ENCODE measurements at regions of chr5 and their contacts with region 1.

Region 1: DNA sequence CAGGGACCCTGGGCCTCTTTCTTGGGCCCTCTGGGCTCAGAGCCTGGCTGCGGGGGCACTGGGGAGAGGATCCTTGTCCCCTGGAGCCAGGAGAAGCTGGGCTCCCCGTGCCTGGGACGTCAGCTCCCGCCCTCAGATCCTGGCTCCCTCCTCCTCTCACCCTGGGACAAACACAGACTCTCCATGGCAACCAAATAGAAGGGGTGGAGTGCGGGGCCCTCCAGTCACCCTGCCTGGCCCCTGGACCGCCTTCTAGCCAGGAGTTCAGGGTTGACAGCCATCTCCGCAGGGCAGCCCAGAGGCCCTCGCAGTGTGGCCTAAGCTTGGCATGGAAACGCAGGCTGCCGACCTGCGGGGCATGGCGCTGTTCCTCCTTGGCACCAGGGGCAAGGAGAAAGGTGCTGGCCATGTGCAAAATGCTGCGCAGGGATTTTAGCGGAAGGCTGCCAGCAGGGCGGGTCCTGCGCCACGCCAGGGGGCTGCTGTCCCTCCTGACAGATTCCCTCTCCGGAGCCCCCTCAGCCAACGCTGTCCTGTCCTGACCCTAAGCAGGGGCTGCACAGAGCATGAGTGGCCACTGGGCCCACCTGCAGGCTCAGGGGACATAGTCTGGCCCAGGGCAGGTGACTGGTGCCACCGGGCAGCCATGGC is 1.0 kb downstream of the ZDHHC11 start:
- DNase-seq: no peak
- ATAC-seq: no peak
- H3K4me3 ChIP-seq: no peak overlapping the region
- H3K4me3 Mint-ChIP-seq: no peak overlapping the region
- H3K27ac ChIP-seq: no peak overlapping the region
- H3K27ac Mint-ChIP-seq: no peak overlapping the region
- H3K4me1 ChIP-seq: no peaks in the 10 kb centered on the region
- H3K4me1 Mint-ChIP-seq: peaks cover 6% of the 10 kb centered on the region
- H3K27me3 ChIP-seq: peaks cover 0 to 3% of the 10 kb centered on the region in 2 experiments
- H3K27me3 Mint-ChIP-seq: peaks cover 18% of the 10 kb centered on the region
- CTCF ChIP-seq: no peak

Region 2: DNA sequence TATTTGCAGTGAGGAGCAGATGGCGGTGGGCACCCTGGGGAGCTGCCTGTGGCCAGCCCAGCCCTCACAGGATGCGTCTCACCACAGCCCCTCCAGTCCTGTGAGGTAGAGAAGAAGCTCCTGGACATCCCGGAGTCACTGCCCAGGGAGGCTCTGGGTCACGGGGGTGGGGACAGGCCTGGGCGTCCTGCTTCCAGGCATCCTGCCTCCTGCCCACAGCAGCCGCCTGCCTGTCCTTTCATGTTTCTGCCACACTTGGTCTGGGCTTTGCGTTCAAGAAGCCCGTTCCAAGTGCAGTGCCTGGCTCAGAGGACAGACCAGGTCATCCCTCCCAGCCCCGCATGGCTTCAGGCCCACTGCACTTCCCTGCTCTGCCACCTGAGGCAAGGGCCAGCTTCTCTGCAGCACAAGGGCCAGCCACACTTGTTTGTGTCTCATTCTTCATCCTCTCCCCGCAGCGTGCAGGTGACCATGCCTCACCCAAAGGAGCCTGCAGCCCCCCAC is 103.5 kb before region 1 on chr5:
- CTCF ChIA-PET with region 1: no interaction called
- POLR2A ChIA-PET with region 1: no interaction called
- intact Hi-C with region 1: loop called in 1 of 2 experiments (anchors 5 kb)
- DNase-seq: peak in 1 of 9 experiments; percentile 46
- ATAC-seq: no peak
- H3K4me3 ChIP-seq: no peak overlapping the region
- H3K4me3 Mint-ChIP-seq: no peak overlapping the region
- H3K27ac ChIP-seq: no peak overlapping the region
- H3K27ac Mint-ChIP-seq: no peak overlapping the region
- H3K4me1 ChIP-seq: no peaks in the 10 kb centered on the region
- H3K4me1 Mint-ChIP-seq: no peaks in the 10 kb centered on the region
- H3K27me3 ChIP-seq: no peaks in the 10 kb centered on the region
- H3K27me3 Mint-ChIP-seq: no peaks in the 10 kb centered on the region
- CTCF ChIP-seq: no peak

Region 3: DNA sequence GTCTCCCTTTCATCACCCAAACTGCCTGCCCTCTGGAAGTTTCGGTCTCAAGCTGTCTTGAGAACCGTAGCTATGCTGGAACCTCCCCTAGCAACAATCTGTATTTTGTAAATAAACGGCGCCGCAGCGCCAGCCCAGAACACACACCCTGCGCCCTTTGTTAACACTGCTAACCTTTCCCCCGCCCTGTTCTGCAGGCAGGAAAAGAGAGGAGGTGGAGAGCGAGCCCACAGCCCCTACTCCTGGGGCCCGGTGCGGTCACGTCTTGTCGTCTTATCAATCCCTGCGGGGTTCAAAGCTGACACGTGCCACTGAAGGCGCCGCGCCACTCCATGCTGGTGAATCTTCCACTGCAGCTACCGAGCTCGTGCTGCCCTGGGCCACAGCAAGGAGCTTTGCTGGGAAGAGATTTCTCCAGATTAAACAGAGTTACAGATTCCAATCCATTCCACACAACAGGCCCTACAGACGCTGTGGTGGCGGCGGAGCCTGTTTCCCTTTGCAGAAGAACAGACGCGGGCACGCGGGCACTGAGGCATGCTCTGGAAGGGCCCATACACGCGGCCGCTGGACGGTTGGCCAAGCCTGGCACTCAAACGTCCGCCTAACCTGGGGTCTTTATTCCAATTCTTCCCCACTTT is 90.5 kb before region 1 on chr5:
- CTCF ChIA-PET with region 1: no interaction called
- POLR2A ChIA-PET with region 1: no interaction called
- intact Hi-C with region 1: loop called in 1 of 2 experiments (anchors 5 kb)
- DNase-seq: peak in 8 of 9 experiments; percentile 41 to 76 (median 58)
- ATAC-seq: peak; percentile 81
- H3K4me3 ChIP-seq: no peak overlapping the region
- H3K4me3 Mint-ChIP-seq: peak overlapping the region; percentile 58
- H3K27ac ChIP-seq: peak overlapping the region in 1 of 2 experiments; percentile 5
- H3K27ac Mint-ChIP-seq: no peak overlapping the region
- H3K4me1 ChIP-seq: peaks cover 7% of the 10 kb centered on the region
- H3K4me1 Mint-ChIP-seq: peaks cover 9% of the 10 kb centered on the region
- H3K27me3 ChIP-seq: no peaks in the 10 kb centered on the region
- H3K27me3 Mint-ChIP-seq: no peaks in the 10 kb centered on the region
- CTCF ChIP-seq: no peak

Measured in CD8-positive, alpha-beta T cell (primary cell).